Astrocyte of the cerebellum (primary cell): ENCODE measurements at regions of chr20 and their contacts with region 1.

Region 1: GRCh38 chr20:56953048-56953586 is 313.3 kb downstream of the BMP7 start:
- DNase-seq: no peak
- H3K4me3 ChIP-seq: no peak overlapping the region
- CTCF ChIP-seq: no peak

Region 2: DNA sequence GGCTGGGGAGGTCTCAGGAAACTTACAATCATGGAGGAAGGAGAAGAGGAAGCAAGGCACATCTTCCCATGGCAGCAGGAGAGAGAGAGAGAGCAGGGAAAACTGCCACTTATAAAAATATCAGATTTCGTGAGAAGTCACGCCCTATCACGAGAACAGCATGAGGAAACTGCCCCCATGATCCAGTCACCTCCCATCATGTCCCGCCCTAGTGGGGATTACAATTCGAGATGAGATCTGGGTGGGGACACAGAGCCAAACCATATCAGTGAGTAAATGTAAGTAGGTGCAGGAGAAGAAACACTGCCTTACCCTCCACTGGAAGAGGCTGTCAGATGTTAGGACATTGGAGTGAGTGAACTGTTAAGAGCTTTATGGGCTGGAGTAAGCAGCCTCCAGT is 53.6 kb before region 1 on chr20:
- in situ Hi-C with region 1: no loop called
- DNase-seq: no peak
- H3K4me3 ChIP-seq: no peak overlapping the region
- CTCF ChIP-seq: no peak

Region 3: DNA sequence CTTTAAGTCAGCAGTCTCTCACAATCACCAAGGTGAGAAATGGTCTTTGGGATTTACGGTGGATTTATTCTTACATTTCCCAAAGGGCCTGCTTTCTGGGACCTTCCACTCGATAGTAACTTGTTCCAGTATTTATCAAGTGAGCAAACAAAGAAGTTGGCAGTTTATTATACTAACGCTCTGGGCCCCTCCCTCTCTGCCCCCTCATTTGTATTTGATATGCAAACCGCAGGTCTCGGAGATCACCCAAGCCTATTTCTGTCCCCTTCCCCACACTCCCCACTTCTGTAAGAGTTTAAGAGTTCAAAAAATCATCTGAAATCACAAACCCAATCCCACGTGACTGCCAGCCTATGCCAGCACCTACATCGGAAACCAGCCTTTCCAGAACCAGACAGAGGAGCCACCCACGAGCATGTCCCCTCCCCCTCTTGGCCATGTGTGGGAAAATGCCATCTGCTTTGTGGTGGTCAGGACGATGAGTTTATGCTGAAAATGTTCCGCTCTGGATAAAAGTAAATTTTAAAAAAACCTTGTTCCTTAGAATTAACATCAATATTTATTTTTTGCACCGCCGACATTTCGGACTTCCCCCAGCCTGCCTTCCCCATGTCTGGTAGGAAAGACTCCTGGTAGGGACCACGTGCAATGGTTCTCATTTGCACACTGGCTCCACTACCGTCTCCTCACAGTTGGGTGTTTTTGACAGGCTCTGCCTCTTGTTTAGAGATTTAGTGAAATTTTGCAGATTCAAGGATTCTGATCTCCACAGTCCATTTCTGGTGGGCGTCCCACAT is 43.0 kb before region 1 on chr20:
- in situ Hi-C with region 1: loop called (anchors 5 kb)
- DNase-seq: no peak
- H3K4me3 ChIP-seq: no peak overlapping the region
- CTCF ChIP-seq: no peak

Region 4: GRCh38 chr20:57006411-57007170 is 53.5 kb after region 1 on chr20:
- in situ Hi-C with region 1: no loop called
- DNase-seq: no peak
- H3K4me3 ChIP-seq: no peak overlapping the region
- CTCF ChIP-seq: no peak